ENCODE measurements at regions of chr16 and their contacts with region 1.

Region 1: DNA sequence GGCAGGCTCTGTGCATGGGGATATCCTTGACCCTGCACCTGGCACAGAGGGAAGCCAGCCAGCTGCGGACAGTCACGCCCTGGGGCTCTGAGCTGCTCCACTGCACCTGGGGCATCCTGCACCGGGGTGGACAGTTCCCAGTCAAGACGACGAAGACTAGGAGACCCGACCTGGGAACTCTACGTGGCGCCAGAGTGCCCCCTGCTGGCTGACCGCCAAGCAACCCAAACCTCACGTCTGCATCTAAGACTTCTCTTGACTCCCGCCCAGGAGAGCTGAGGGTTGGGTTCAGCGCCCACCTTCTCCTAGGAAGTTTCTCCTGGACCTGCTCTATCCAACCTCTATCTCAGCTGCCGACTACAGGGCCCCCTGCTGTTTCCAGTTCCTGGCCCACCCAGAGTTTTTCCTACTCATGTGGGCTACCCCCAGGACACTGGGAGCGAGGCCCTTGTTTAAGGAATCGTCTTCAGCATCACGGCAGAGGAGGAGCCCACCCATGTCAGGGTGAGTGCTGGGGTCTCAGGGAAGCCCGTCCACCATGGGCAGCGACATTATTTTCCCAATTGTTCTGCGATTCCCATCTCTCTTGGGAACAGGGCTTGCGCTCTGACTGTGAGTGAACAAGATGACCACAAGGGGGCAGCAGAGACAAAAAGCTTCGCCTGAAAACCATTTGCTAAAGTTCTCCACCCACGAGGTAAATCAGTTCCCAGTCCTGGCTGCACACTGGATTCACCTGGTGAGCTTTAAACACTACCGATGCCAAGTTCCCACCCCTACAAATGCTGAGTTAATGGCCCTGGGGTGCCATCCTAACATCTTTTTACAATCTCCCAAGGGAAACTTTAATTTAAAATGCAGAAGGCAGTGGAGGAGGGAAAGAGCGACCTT is 29.3 kb downstream of the TLE7 start:
- DNase-seq: peak in 1 of 2 donors; percentile 69
- H3K4me3 ChIP-seq: no peak overlapping the region
- H3K27ac ChIP-seq: no peak overlapping the region
- H3K4me1 ChIP-seq: no peaks in the 10 kb centered on the region
- H3K27me3 ChIP-seq: no peaks in the 10 kb centered on the region
- CTCF ChIP-seq: peak; percentile 62 to 86 (median 80)

Region 2: GRCh38 chr16:71426072-71426879 is 13.8 kb after region 1 on chr16:
- intact Hi-C with region 1: no loop called
- DNase-seq: no peak
- H3K4me3 ChIP-seq: no peak overlapping the region
- H3K27ac ChIP-seq: no peak overlapping the region
- H3K4me1 ChIP-seq: no peaks in the 10 kb centered on the region
- H3K27me3 ChIP-seq: no peaks in the 10 kb centered on the region
- CTCF ChIP-seq: no peak

Region 3: GRCh38 chr16:71499775-71500364 is 87.4 kb after region 1 on chr16:
- intact Hi-C with region 1: loop called (anchors 1 kb)
- DNase-seq: no peak
- H3K4me3 ChIP-seq: no peak overlapping the region
- H3K27ac ChIP-seq: no peak overlapping the region
- H3K4me1 ChIP-seq: no peaks in the 10 kb centered on the region
- H3K27me3 ChIP-seq: no peaks in the 10 kb centered on the region
- CTCF ChIP-seq: peak; percentile 56 to 68 (median 57)

Region 4: GRCh38 chr16:71610936-71611871 is 198.7 kb after region 1 on chr16:
- intact Hi-C with region 1: loop called (anchors 5 kb)
- DNase-seq: no peak
- H3K4me3 ChIP-seq: no peak overlapping the region
- H3K27ac ChIP-seq: no peak overlapping the region
- H3K4me1 ChIP-seq: no peaks in the 10 kb centered on the region
- H3K27me3 ChIP-seq: no peaks in the 10 kb centered on the region
- CTCF ChIP-seq: peak; percentile 24 to 64 (median 61)

Measured in ascending aorta (tissue), 2 donors.